ENCODE measurements at regions of chr5 and their contacts with region 1.

Region 1: GRCh38 chr5:44536650-44537260 is 147.5 kb upstream of the FGF10 start:
- DNase-seq: no peak
- ATAC-seq: no peak

Region 2: GRCh38 chr5:44681906-44682305 is 145.2 kb after region 1 on chr5:
- intact Hi-C with region 1: no loop called
- DNase-seq: no peak
- ATAC-seq: no peak

Region 3: DNA sequence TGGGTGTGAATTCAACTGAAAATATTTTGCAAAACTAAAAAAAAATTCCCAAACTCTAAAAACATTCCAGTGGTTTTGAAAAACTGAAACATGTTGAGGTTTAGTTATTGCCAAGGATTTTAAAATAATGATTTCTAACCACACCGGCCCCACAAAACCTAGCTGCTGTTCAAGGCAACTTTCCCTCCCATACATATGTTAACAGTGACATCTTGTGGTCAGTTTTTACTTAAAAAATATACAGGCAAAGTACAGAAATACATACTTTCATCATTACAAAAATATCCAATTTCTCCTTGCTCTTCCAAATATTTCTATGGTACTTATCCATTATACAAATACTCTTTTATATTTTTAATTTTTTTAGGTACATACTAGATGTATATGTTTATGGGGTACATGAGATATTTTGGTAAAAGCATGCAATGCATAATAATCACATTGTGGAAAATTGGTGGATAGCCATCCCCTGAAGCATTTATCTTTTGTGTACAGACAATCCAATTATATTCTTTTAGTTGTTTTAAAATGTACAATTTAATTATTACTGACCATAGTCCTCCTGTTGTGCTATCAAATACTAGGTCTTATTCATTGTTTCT is 237.6 kb after region 1 on chr5:
- intact Hi-C with region 1: loop called (anchors 5 kb)
- DNase-seq: no peak
- ATAC-seq: no peak

Measured in left ventricle myocardium superior (tissue), 1 donor.